GM23248 (cell line): ENCODE measurements at regions of chr1 and their contacts with region 1.

Region 1: GRCh38 chr1:87942165-87942564 is 613.5 kb downstream of the LMO4 start:
- DNase-seq: peak; percentile 75
- H3K4me3 ChIP-seq: no peak overlapping the region
- H3K27ac ChIP-seq: 0 out of 2 replicates have a peak overlapping the region, but pooled peaks have one; percentile 25
- H3K4me1 ChIP-seq: peaks cover 23% of the 10 kb centered on the region
- H3K27me3 ChIP-seq: no peaks in the 10 kb centered on the region

Region 2: GRCh38 chr1:87131809-87132283 is 810.3 kb before region 1 on chr1:
- in situ Hi-C with region 1: loop called (anchors 25 kb)
- DNase-seq: peak; percentile 89
- H3K4me3 ChIP-seq: peak overlapping the region; percentile 70
- H3K27ac ChIP-seq: no peak overlapping the region
- H3K4me1 ChIP-seq: 0 out of 2 replicates have a peak, but pooled peaks cover 6% of the 10 kb centered on the region
- H3K27me3 ChIP-seq: no peaks in the 10 kb centered on the region